Left ventricle myocardium inferior (tissue), 1 donor: ENCODE measurements at regions of chr9 and their contacts with region 1.

Region 1: DNA sequence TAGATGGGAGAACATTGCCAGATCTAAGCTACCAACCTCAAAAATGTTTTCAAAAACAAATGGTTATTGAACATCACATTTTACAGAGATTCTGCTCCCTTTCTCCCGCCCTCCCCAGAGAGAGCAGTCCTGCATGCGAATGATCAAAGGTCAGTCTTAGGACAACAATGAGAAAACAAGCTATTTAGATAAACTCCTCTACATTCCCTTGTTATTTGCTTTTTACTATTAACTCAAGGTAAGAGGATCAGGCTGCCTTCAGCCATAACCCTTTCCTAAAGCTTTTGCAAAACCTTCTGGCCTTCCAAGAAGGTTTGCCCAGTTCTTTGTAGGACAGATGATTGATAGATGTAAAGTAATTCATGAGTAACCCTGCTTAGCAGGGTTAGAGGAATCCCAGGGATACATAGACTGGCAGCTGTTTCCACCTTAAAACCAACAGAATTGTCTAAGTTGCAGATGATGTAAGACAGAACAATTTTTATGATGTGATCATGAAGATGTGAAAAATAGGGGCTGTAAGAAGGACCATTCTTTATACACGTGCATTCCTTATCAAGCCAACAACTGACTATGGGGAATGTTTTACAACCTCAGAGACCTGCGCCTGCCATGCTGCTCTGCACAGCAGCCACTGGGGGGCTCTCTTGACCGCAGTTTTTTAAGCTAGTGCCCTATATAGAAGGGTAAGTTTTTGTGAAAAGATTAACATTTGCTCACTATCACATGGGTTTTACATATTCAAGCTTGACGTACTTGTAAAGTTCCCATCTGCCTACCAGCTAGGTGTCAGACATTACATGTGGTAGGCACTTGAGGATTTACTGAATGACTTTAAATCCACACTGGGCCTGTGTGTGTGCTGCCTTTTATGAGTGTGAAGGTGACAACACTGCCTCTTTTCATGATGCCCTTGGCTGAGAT is 2.3 kb upstream of the ZNF782 start:
- DNase-seq: peak; percentile 27
- H3K4me3 ChIP-seq: no peak overlapping the region
- H3K27ac ChIP-seq: no peak overlapping the region
- H3K4me1 ChIP-seq: peaks cover 35% of the 10 kb centered on the region
- H3K27me3 ChIP-seq: no peaks in the 10 kb centered on the region
- CTCF ChIP-seq: peak; percentile 96

Region 2: GRCh38 chr9:96436063-96436455 is 420.6 kb before region 1 on chr9:
- intact Hi-C with region 1: no loop called
- DNase-seq: no peak
- H3K4me3 ChIP-seq: no peak overlapping the region
- H3K27ac ChIP-seq: no peak overlapping the region
- H3K4me1 ChIP-seq: no peaks in the 10 kb centered on the region
- H3K27me3 ChIP-seq: no peaks in the 10 kb centered on the region
- CTCF ChIP-seq: no peak

Region 3: DNA sequence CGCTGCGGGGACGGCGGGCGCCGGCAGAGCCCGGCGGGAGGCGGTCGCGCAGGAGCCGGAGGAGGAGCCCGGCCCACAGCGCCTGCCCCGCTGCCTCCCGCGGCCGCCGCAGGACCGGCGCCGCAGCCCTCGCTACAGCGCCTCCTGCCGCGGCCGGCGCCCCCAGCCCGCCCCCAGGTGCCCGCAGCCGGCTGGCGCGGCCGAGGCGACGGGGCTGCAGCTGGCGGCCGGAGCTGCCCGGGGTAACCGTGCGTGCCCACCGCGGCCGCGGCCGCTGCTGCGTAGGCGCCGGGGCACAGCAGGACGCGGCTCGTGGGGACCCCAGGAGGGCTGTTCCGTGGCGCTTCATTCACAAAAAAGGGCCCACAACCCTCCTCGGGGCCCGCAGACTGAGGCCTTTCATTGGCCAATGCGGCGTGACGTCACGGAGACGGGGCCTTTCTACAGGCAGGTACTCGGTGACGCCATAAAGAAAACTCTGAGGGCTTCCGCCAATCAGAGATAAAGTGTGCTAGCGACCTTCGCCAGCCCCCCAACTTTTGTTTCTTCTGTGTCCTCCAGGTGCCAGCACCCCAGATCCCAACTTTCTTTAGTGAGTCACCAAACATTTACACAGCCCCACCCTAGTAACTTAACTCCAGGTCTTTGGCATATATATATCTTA is 237.0 kb before region 1 on chr9 and contains the start of gene CDC14B:
- intact Hi-C with region 1: no loop called
- DNase-seq: peak; percentile 90
- H3K4me3 ChIP-seq: peak within 1 kb of the TSS; percentile 87
- H3K27ac ChIP-seq: peak within 1 kb of the TSS; percentile 93
- H3K4me1 ChIP-seq: peaks cover 23% of the 10 kb centered on the region
- H3K27me3 ChIP-seq: peaks cover 14% of the 10 kb centered on the region
- CTCF ChIP-seq: no peak
- total RNA-seq, gene CDC14B: 26.4 TPM

Region 4: GRCh38 chr9:96784021-96784420 is 72.6 kb before region 1 on chr9:
- intact Hi-C with region 1: no loop called
- DNase-seq: no peak
- H3K4me3 ChIP-seq: no peak overlapping the region
- H3K27ac ChIP-seq: no peak overlapping the region
- H3K4me1 ChIP-seq: peaks cover 10% of the 10 kb centered on the region
- H3K27me3 ChIP-seq: no peaks in the 10 kb centered on the region
- CTCF ChIP-seq: no peak

Region 5: DNA sequence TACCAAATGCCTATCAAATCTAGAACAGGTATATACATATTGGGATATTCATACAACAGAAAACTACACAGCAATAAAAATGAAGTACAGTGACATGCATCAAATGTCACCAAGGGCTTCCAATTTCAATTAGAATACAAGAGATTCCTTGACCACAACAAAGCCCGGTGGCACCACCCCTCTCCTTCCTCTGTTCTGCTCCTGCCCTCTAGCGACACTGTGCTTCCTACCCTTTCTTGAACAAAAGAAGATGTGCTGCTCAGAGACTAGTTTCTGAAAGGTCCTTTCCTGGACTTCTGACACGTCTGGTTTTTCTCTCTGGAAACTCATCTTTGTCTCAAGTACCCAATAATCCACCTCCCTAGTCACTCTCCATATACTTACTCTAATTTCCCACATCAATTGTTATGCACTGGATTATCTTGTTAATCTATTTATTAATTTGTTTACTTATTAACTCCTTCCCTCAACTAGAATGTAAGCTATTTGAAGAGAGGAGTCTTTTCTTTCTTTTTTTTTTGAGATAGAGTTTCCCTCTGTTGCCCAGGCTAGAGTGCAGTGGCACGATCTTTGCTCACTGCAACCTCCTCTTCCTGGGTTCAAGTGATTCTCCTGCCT is 252.7 kb after region 1 on chr9:
- intact Hi-C with region 1: loop called (anchors 5 kb)
- DNase-seq: no peak
- H3K4me3 ChIP-seq: no peak overlapping the region
- H3K27ac ChIP-seq: no peak overlapping the region
- H3K4me1 ChIP-seq: no peaks in the 10 kb centered on the region
- H3K27me3 ChIP-seq: peaks cover 8% of the 10 kb centered on the region
- CTCF ChIP-seq: peak; percentile 68

Region 6: DNA sequence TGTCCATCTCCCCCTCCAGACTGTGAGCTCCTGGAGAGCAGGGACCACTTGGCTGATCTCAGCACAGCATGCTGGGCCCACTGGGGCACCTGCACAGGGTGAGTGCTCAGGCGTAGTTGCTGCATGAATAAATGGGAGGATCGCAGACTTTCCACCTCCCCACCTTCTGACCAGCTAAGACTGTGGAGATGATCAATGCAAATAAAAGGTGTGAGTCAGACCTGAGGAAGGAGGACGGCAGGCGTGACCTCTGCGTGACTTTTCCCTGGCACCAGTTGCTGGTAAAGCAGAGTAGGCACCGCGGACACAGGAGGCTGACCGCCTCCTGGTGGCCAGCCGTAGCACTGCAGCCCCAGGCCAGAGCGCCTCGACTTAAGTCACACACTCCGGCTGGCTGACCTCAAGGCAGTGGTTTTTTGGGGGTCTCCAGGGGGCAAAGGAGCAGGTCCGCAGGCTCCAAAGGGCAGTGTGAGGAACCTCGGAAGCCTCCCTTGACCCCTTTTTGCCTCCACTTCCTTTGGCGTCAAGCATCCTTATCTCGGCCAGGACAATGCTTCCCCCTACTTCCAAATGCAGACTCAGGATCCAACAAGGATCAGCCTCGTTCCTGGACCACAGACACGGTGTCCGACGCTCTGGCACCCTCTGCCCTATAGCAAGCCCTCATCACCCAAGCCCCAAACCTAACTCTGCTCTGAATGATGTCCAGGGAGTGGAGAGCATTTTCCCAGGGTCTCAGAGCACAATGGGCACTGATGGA is 542.6 kb after region 1 on chr9:
- intact Hi-C with region 1: loop called (anchors 5 kb)
- DNase-seq: peak; percentile 69
- H3K4me3 ChIP-seq: no peak overlapping the region
- H3K27ac ChIP-seq: no peak overlapping the region
- H3K4me1 ChIP-seq: no peaks in the 10 kb centered on the region
- H3K27me3 ChIP-seq: no peaks in the 10 kb centered on the region
- CTCF ChIP-seq: peak; percentile 97